ENCODE measurements at regions of chr12 and their contacts with region 1.

Region 1: GRCh38 chr12:46983393-46984266 is 95.8 kb upstream of the PCED1B start:
- DNase-seq: peak; percentile 40
- H3K4me3 Mint-ChIP-seq: no peak overlapping the region
- H3K27ac Mint-ChIP-seq: no peak overlapping the region
- H3K4me1 Mint-ChIP-seq: peaks cover 8% of the 10 kb centered on the region
- H3K27me3 Mint-ChIP-seq: peaks cover 16% of the 10 kb centered on the region

Region 2: GRCh38 chr12:47021298-47021697 is 37.7 kb after region 1 on chr12:
- CTCF ChIA-PET with region 1: interaction called, 22 read pairs
- POLR2A ChIA-PET with region 1: no interaction called
- intact Hi-C with region 1: no loop called
- DNase-seq: no peak
- H3K4me3 Mint-ChIP-seq: no peak overlapping the region
- H3K27ac Mint-ChIP-seq: no peak overlapping the region
- H3K4me1 Mint-ChIP-seq: peaks cover 7% of the 10 kb centered on the region
- H3K27me3 Mint-ChIP-seq: peaks cover 23% of the 10 kb centered on the region

Region 3: GRCh38 chr12:47102845-47103651 is 119.4 kb after region 1 on chr12:
- CTCF ChIA-PET with region 1: no interaction called
- POLR2A ChIA-PET with region 1: no interaction called
- intact Hi-C with region 1: no loop called
- DNase-seq: no peak
- H3K4me3 Mint-ChIP-seq: no peak overlapping the region
- H3K27ac Mint-ChIP-seq: no peak overlapping the region
- H3K4me1 Mint-ChIP-seq: no peaks in the 10 kb centered on the region
- H3K27me3 Mint-ChIP-seq: no peaks in the 10 kb centered on the region